Vagina (tissue), 2 donors: ENCODE measurements at regions of chr10 and their contacts with region 1.

Region 1: GRCh38 chr10:62038609-62039190 is 137.2 kb downstream of the ARID5B start:
- DNase-seq: no peak
- H3K4me3 ChIP-seq: no peak overlapping the region
- H3K27ac ChIP-seq: peak overlapping the region; percentile 77
- H3K4me1 ChIP-seq: peaks cover 53% of the 10 kb centered on the region
- H3K27me3 ChIP-seq: no peaks in the 10 kb centered on the region
- CTCF ChIP-seq: peak; percentile 58 to 91 (median 71)
- POLR2A ChIP-seq: no peak

Region 2: DNA sequence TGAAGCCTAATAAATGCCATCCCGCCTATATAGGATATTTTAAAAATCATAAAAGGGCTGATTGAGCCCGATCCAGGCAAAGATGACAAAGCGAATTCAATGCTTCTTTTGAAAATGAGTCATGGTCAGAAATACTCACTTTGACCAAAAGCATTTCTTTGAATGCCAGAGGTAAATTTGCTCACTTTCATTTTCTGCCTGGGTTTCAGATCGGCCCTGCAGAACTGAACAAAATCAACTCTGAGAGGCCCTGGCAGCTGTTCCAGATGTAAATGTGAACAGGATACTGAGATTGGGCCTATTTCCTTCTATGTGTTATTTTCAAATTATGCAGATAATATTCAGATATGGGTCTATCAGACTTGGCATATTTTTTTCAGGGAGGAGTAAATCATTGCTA is 252.0 kb before region 1 on chr10:
- intact Hi-C with region 1: no loop called
- DNase-seq: no peak
- H3K4me3 ChIP-seq: peak overlapping the region in 1 of 2 donors; percentile 3
- H3K27ac ChIP-seq: no peak overlapping the region
- H3K4me1 ChIP-seq: peaks cover 26% of the 10 kb centered on the region
- H3K27me3 ChIP-seq: no peaks in the 10 kb centered on the region
- CTCF ChIP-seq: no peak
- POLR2A ChIP-seq: no peak

Region 3: GRCh38 chr10:61903221-61903927 is 135.3 kb before region 1 on chr10:
- intact Hi-C with region 1: loop called (anchors 5 kb)
- DNase-seq: peak in 1 of 2 donors; percentile 91
- H3K4me3 ChIP-seq: peak overlapping the region; percentile 77 to 94
- H3K27ac ChIP-seq: peak overlapping the region; percentile 98
- H3K4me1 ChIP-seq: peaks cover 50% of the 10 kb centered on the region
- H3K27me3 ChIP-seq: no peaks in the 10 kb centered on the region
- CTCF ChIP-seq: no peak
- POLR2A ChIP-seq: peak in 1 of 2 donors; percentile 27

Region 4: GRCh38 chr10:62244780-62245467 is 206.2 kb after region 1 on chr10:
- intact Hi-C with region 1: loop called (anchors 5 kb)
- DNase-seq: no peak
- H3K4me3 ChIP-seq: no peak overlapping the region
- H3K27ac ChIP-seq: no peak overlapping the region
- H3K4me1 ChIP-seq: peaks cover 12% of the 10 kb centered on the region
- H3K27me3 ChIP-seq: no peaks in the 10 kb centered on the region
- CTCF ChIP-seq: peak; percentile 50 to 89 (median 71)
- POLR2A ChIP-seq: no peak